Activated naive CD4-positive, alpha-beta T cell treated with anti-CD3 and anti-CD28 coated beads for 36 hours (primary cell): ENCODE measurements at regions of chr14 and their contacts with region 1.

Region 1: GRCh38 chr14:93115069-93115820 is 480 bp downstream of the ITPK1 start:
- DNase-seq: peak; percentile 80
- H3K4me3 Mint-ChIP-seq: peak overlapping the region; percentile 77
- H3K27ac Mint-ChIP-seq: no peak overlapping the region
- H3K4me1 Mint-ChIP-seq: peaks cover 24% of the 10 kb centered on the region
- H3K27me3 Mint-ChIP-seq: no peaks in the 10 kb centered on the region

Region 2: DNA sequence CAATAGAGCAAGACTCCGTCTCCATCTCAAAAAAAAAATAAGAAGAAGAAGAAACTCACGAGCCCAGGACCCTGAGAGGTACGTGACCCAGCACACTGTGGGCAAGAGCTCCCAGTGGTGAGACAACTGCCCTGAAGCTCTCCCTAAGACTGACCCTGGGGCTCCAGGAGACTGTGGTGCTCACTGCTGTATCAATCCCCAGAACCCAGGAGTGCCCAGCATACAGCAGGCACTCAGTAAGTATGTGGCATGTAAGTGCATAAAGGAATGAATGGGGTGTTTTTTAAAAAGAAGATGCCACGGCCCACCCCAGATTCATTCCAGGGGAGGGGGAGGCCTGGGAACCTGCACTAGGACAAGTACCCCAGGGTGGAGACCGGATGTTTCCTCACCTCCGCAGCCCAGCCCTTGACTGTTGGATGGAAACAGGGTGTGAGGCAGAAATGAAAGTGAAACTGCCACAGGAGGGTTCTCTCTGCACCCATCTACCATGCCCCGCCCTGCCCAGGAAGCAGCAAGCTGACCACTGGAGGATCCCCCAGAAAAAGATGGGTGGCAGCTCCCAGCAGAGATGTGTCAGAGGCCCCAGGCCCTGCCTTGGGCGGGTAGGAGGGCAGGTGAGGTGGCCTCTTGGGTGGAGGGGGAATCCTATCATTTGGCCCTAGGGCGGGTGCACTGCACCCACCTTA is 11.7 kb before region 1 on chr14:
- CTCF ChIA-PET with region 1: interaction called, 36 read pairs
- intact Hi-C with region 1: no loop called
- DNase-seq: peak; percentile 79
- H3K4me3 Mint-ChIP-seq: peak overlapping the region; percentile 34
- H3K27ac Mint-ChIP-seq: peak overlapping the region; percentile 59
- H3K4me1 Mint-ChIP-seq: peaks cover 20% of the 10 kb centered on the region
- H3K27me3 Mint-ChIP-seq: no peaks in the 10 kb centered on the region

Region 3: DNA sequence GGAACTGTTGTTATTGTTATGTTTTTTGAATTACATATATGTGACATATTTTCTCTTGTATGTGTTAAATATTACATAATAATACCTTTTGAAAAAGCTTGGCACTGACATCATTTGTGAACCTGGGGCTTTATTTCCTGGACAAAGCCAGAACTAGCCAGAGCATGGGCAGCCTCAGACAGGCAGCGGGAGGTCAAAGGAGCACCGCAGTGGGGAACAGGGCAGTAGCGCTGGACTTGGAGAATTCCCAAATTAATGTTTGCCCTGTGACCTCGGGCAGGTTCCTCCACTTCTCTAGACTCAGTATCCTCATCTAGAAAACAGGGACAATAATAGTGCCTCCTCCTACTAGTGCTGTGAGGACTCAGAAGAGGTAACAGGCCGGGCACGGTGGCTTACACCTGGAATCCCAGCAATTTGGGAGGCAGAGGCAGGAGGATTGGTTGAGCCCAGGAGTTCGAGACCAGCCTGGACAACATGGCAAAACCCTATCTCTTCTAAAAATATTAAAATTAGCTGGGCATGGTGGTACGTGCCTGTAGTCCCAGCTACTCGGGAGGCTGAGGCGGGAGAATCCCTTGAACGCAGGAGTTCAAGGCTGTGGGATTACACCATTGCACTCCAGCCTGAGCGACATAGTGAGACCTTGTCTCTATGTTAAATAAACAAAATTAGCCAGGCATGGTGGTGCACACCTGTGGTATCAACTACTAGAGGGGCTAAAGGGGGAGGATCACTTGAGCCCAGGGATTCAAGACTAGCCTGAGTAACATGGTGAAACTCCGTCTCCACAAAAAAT is 27.8 kb after region 1 on chr14:
- CTCF ChIA-PET with region 1: interaction called, 53 read pairs
- intact Hi-C with region 1: loop called (anchors 1 kb)
- DNase-seq: no peak
- H3K4me3 Mint-ChIP-seq: no peak overlapping the region
- H3K27ac Mint-ChIP-seq: no peak overlapping the region
- H3K4me1 Mint-ChIP-seq: peaks cover 2% of the 10 kb centered on the region
- H3K27me3 Mint-ChIP-seq: no peaks in the 10 kb centered on the region

Region 4: DNA sequence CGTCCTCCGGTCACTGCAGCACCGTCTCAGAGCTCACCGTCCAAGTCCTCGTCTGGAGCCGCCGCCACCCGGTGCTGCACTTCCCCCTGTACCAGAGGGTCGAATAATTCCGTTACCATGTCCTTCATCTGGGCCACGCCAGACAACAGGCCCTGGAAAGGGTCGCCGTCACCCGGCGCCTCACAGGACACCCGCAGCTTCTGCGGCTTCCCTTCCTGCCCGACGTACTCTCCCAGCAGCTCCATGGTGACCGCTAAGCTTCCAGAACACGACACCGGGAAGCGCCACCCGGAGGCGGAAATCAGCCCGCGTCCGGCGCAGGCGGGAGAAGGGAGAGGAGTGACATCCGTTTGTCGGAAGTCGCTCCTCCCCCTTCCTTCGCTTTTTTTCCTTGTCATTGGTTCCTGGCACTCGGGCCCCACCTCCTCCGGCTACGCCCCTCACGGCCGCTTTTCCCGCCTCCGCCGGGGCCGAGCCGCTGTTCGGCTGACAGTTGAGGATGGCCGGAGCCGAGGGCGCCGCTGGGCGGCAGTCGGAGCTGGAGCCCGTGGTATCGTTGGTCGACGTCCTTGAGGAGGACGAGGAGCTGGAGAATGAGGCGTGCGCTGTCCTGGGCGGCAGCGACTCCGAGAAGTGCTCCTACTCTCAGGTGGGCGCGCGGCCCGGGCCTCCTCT is 91.7 kb after region 1 on chr14 and contains the starts of genes GON7 and UBR7:
- CTCF ChIA-PET with region 1: interaction called, 6 read pairs
- intact Hi-C with region 1: loop called (anchors 1 kb)
- DNase-seq: peak; percentile 95
- H3K4me3 Mint-ChIP-seq: peak within 1 kb of the TSS; percentile 92
- H3K27ac Mint-ChIP-seq: peak within 1 kb of the TSS; percentile 83
- H3K4me1 Mint-ChIP-seq: peaks cover 32% of the 10 kb centered on the region
- H3K27me3 Mint-ChIP-seq: no peaks in the 10 kb centered on the region
- total RNA-seq, gene GON7: 4.8 to 7.0 TPM
- total RNA-seq, gene UBR7: 43.0 to 45.0 TPM

Region 5: DNA sequence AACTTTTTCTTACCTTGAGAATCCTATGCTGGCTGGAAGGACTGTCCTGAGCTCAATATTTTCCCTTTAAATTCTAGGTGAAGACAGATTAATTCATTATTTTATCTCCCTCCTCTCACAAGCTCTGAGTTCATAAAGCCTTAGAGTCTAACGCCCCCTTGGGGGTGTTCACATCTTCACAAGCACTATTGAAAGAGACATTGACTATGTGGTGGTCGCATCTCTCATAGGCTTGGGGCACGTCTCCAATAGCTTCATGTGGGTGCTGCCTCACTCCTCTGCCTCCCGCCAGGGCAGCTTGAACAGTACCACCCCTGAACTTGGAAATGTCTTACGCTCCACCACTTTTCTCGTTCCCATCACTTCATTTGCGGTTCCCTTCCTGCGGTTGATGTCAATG is 421.7 kb after region 1 on chr14:
- CTCF ChIA-PET with region 1: interaction called, 3 read pairs
- intact Hi-C with region 1: loop called (anchors 2 kb)
- DNase-seq: no peak
- H3K4me3 Mint-ChIP-seq: no peak overlapping the region
- H3K27ac Mint-ChIP-seq: no peak overlapping the region
- H3K4me1 Mint-ChIP-seq: no peaks in the 10 kb centered on the region
- H3K27me3 Mint-ChIP-seq: peaks cover 19% of the 10 kb centered on the region